Activated CD4-positive, alpha-beta T cell treated with anti-CD3 and anti-CD28 coated beads for 36 hours (primary cell): ENCODE measurements at regions of chr2 and their contacts with region 1.

Region 1: GRCh38 chr2:24490674-24491625 is at the start of gene NCOA1:
- DNase-seq: peak; percentile 96
- ATAC-seq: peak; percentile 89
- H3K4me3 Mint-ChIP-seq: peak within 1 kb of the TSS; percentile 85
- H3K27ac Mint-ChIP-seq: peak within 1 kb of the TSS; percentile 95
- H3K4me1 Mint-ChIP-seq: peaks cover 46% of the 10 kb centered on the region
- H3K27me3 Mint-ChIP-seq: no peaks in the 10 kb centered on the region
- total RNA-seq, gene NCOA1: 20.6 to 29.3 TPM

Region 2: DNA sequence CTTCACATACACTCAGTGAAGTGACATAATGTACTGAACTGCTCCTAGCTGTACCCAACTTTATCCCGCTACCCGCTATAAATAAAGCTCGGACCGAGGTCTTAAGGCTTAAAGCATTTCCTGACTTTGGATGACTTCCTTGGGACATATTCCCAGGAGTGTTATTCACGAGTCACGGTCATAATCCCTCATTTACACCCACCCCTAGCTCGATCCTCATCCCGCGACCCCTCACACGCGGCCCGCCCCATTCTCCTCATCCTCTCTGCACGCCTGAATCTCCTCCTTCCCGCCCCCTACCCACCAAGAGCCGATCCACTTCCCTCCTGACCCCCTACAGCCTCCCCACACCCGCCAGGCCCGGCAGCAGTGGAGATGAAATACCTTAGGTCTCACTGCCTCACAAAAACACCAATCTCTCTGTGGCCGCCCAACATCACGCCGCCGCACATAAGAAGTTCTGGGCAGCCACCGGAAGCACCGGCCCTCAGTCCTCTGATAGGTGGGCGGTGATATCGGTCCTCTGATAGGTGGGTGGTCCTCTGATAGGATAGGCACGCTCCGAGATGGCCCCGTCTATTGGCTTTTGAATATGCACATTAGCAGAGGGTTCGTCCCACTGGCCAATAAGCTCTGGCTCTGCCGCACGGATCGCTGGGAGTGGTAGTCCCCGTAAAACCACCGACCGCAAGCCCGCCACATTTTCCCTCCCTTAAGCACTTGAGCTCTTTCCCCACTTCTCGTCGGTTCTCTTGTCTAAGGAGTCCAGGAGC is 443.8 kb before region 1 on chr2 and contains the start of gene WDCP:
- CTCF ChIA-PET with region 1: no interaction called
- POLR2A ChIA-PET with region 1: no interaction called
- intact Hi-C with region 1: loop called in 1 of 2 experiments (anchors 2 kb)
- DNase-seq: peak; percentile 97
- ATAC-seq: peak; percentile 100
- H3K4me3 Mint-ChIP-seq: peak within 1 kb of the TSS; percentile 88
- H3K27ac Mint-ChIP-seq: peak within 1 kb of the TSS; percentile 91
- H3K4me1 Mint-ChIP-seq: peaks cover 25% of the 10 kb centered on the region
- H3K27me3 Mint-ChIP-seq: peaks cover 5% of the 10 kb centered on the region
- total RNA-seq, gene WDCP: 13.2 to 21.5 TPM

Region 3: DNA sequence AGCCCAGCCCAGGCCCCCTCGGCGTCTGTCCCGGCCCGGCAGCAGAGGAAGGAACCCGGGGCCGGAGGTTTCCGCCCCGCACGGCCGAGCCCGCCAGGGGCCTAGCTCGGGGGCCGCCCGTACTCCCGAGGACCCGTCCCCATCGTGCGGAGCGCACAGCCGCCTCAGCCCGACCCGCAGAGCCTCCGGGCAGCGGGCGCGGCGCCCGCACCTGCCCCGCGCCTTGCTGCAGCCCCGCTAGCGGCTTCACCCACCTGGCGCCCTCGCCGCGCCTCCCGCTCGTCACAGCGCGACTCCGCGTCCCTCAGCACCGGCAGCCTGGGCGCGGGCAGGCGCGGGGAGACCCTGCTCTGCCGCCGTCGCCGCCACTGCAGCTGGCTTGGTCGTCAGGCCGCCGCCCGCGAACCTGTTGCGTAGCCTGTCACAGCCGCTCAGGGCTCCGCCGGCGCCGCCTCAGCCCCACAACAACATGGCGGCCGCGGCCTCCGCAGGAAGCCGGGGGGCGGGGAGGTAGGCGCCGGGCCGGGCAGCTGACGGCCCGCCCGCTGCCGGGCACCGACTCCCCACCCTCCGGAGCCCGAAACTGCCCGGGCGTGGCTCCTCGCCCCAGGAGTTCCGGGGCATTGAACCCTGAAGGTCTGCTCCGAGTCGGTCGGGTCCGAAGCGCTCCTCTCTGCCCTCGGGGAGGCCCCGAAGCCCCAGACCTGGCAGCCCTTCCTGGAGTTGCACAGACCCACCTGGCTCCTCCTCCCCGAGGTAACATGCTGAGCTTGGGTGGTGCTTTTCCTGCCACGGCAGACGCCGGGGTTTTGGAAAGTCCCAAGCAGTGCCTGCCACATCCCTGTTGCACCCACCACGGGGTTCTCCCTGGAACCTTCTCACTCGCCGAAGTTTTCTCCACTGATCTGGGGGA is 130.6 kb before region 1 on chr2 and contains the start of gene ITSN2:
- CTCF ChIA-PET with region 1: no interaction called
- POLR2A ChIA-PET with region 1: no interaction called
- intact Hi-C with region 1: loop called in 1 of 2 experiments (anchors 2 kb)
- DNase-seq: peak; percentile 90
- ATAC-seq: peak; percentile 89
- H3K4me3 Mint-ChIP-seq: peak within 1 kb of the TSS; percentile 84
- H3K27ac Mint-ChIP-seq: peak within 1 kb of the TSS; percentile 94
- H3K4me1 Mint-ChIP-seq: peaks cover 29% of the 10 kb centered on the region
- H3K27me3 Mint-ChIP-seq: no peaks in the 10 kb centered on the region
- total RNA-seq, gene ITSN2: 46.0 to 49.6 TPM

Region 4: DNA sequence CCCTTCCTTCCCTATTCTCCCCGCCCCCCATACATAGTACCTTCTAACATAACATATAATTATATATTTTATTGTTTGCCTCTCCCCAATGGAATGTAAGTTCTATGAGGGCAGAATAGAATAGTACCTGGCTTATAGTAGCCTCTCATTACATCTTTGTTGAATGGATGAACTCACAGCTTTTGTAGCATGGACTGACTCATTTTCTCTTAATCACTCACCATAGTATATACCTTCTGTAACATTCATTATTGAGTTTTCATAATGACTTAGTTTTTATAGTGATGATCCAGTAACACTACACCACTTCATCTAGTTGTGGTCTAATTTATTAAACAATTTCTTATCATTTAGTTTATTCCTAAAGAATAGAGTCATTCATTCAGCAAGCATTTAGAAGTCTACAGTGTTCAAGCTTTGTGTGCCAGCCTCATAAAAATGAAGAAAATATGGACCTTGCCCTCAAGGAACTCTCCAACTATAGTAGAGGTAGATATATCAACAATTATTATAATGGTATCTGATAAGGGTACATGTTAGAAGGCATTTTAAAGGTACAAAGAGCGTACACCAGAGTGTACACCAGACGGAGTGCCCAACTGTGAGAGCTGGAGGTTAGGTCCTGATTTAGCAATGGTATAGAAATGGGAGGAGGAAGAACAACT is 31.2 kb after region 1 on chr2:
- CTCF ChIA-PET with region 1: interaction called, 3 read pairs
- POLR2A ChIA-PET with region 1: no interaction called
- intact Hi-C with region 1: loop called in 1 of 2 experiments (anchors 1 kb)
- DNase-seq: no peak
- ATAC-seq: peak; percentile 93
- H3K4me3 Mint-ChIP-seq: peak overlapping the region; percentile 51
- H3K27ac Mint-ChIP-seq: peak overlapping the region; percentile 90
- H3K4me1 Mint-ChIP-seq: peaks cover 48% of the 10 kb centered on the region
- H3K27me3 Mint-ChIP-seq: no peaks in the 10 kb centered on the region

Region 5: DNA sequence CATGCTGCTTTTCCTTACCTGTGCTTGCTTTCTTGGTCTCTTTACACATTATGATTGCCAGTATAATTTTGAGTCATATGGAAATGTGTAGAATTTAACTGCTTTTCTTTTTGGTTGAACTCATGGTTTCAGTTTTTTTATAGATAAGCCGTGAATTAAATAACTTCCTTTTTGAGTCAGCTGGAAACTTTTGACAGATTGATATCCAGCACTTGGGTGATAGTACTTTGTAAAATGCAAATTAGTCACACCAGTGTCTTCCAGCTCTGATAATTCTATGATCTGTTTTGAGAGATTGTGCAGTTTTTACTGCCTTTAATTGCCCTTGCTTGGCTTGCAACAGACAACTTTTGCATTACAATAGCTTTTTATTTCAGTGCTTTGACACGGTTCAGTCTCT is 86.5 kb after region 1 on chr2:
- CTCF ChIA-PET with region 1: interaction called, 3 read pairs
- POLR2A ChIA-PET with region 1: no interaction called
- intact Hi-C with region 1: loop called (anchors 1 kb)
- DNase-seq: no peak
- ATAC-seq: peak; percentile 76
- H3K4me3 Mint-ChIP-seq: peak overlapping the region; percentile 3
- H3K27ac Mint-ChIP-seq: peak overlapping the region; percentile 79
- H3K4me1 Mint-ChIP-seq: peaks cover 76% of the 10 kb centered on the region
- H3K27me3 Mint-ChIP-seq: no peaks in the 10 kb centered on the region

Region 6: GRCh38 chr2:24827321-24828237 is 336.6 kb after region 1 on chr2:
- CTCF ChIA-PET with region 1: no interaction called
- POLR2A ChIA-PET with region 1: interaction called, 3 read pairs
- intact Hi-C with region 1: loop called in 1 of 2 experiments (anchors 1 kb)
- DNase-seq: peak; percentile 84
- ATAC-seq: peak; percentile 85
- H3K4me3 Mint-ChIP-seq: no peak overlapping the region
- H3K27ac Mint-ChIP-seq: no peak overlapping the region
- H3K4me1 Mint-ChIP-seq: peaks cover 20% of the 10 kb centered on the region
- H3K27me3 Mint-ChIP-seq: no peaks in the 10 kb centered on the region

Region 7: DNA sequence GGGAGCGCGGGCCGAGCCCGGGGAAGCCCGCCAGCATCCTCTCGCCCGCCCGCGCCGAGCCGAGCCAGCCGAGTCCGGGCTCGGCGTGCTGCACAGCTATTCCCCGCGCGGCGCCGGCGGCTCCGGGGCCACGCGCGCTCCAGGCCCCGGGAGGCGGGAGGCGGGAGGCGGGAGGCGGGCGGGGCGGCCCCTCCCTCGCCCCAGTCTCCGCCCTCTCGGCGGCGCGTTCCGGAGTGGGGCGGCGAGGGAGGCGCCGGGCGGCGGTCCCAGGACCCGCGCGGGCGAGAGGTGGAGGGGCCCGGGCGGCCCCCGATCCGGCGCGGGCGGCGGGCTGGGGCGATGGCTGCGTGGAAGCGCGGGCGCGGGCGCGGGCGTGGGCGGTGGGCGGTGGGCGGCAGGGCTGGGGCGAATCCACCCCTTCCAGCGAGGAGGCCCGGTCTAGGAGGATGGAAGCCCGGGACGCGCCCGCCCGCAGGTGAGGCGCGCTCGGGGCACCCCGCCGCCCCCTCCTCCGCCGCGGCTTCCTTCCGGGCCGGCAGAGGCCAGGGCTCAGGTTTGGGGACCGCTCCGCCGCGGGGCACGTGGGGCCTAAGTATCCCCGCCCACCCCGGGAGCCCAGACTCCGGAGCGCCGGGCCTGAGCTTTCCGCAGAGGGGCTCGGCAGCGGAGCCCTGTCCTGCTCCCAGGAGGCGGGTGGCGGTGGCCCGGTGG is 429.3 kb after region 1 on chr2 and contains the start of gene ADCY3:
- CTCF ChIA-PET with region 1: interaction called, 3 read pairs
- POLR2A ChIA-PET with region 1: no interaction called
- intact Hi-C with region 1: loop called in 1 of 2 experiments (anchors 2 kb)
- DNase-seq: peak; percentile 79
- ATAC-seq: peak; percentile 59
- H3K4me3 Mint-ChIP-seq: peak within 1 kb of the TSS; percentile 83
- H3K27ac Mint-ChIP-seq: peak within 1 kb of the TSS; percentile 90
- H3K4me1 Mint-ChIP-seq: peaks cover 33% of the 10 kb centered on the region
- H3K27me3 Mint-ChIP-seq: peaks cover 1% of the 10 kb centered on the region
- total RNA-seq, gene ADCY3: 59.5 to 92.8 TPM

Region 8: GRCh38 chr2:25078171-25079049 is 587.5 kb after region 1 on chr2:
- CTCF ChIA-PET with region 1: no interaction called
- POLR2A ChIA-PET with region 1: no interaction called
- intact Hi-C with region 1: no loop called
- DNase-seq: no peak
- ATAC-seq: no peak
- H3K4me3 Mint-ChIP-seq: no peak overlapping the region
- H3K27ac Mint-ChIP-seq: no peak overlapping the region
- H3K4me1 Mint-ChIP-seq: no peaks in the 10 kb centered on the region
- H3K27me3 Mint-ChIP-seq: peaks cover 25% of the 10 kb centered on the region